ENCODE measurements at regions of chr2 and their contacts with region 1.

Region 1: DNA sequence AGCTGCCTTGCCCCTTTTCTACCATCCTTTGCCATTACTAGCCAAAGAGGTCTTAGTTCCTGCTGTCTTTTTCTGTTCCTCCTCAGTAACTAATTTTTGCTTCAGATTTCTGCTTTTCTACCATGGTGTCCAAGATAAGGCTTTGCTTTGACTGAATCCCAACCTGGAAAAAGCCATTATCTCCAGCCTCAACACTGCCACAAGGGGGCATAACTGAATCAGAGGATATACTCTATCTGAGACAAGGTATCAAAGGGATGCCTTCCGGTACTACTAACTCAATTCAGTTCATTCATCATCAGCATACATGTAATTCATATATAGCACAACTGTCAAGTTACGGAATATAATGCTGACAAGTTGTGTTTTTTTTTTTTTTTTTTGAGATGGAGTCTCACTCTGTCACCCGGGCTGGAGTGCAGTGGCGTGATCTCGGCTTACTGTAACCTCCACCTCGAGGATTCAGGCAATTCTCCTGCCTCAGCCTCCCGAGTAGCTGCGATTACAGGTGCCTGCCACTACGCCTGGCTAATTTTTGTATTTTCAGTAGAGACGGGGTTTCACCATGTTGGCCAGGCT is 11.4 kb downstream of the OSGEPL1 start:
- DNase-seq: peak; percentile 83
- H3K4me3 Mint-ChIP-seq: no peak overlapping the region
- H3K27ac Mint-ChIP-seq: no peak overlapping the region
- H3K4me1 Mint-ChIP-seq: no peaks in the 10 kb centered on the region
- H3K27me3 Mint-ChIP-seq: no peaks in the 10 kb centered on the region

Region 2: DNA sequence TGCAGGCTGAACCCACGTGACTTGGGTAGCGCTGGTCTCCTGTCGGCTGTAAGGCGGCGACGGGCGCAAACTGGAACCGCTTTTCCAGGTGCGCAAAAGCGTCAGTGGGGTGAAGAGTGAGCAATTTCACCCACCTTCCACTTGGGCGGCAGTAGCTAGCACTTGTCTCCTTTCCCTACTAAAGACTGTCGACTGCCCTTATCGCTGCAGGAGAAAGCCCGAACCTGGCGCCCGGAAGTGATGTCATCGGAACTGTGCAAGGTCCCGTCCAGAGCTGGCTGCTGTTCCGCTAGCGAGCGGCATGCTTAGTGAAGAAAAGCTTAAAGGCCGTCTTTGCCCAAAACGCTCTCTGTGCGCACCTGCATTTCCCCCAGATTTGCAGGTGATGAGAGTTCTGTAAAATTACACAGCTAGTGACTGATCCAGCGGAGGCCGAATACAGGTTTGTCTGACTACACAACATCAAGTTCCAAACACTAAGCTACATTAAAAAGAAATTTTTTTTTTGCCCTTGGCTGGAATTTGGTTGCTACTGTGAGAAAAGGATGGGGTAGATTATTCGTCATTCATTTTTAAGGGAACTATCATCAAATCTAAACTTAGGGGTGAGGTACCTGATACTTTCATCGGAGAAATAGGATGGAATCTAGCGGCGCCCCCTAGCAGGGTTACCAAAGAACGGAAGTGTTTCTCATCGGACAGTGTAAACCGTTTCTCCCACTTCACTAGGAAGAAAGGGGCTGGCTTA is 11.6 kb after region 1 on chr2 and contains the start of gene OSGEPL1:
- intact Hi-C with region 1: loop called (anchors 1 kb)
- DNase-seq: peak; percentile 97
- H3K4me3 Mint-ChIP-seq: peak within 1 kb of the TSS; percentile 97
- H3K27ac Mint-ChIP-seq: peak within 1 kb of the TSS; percentile 98
- H3K4me1 Mint-ChIP-seq: peaks cover 12% of the 10 kb centered on the region
- H3K27me3 Mint-ChIP-seq: no peaks in the 10 kb centered on the region
- total RNA-seq, gene OSGEPL1: 11.1 and 12.2 TPM in 2 replicates

Region 3: DNA sequence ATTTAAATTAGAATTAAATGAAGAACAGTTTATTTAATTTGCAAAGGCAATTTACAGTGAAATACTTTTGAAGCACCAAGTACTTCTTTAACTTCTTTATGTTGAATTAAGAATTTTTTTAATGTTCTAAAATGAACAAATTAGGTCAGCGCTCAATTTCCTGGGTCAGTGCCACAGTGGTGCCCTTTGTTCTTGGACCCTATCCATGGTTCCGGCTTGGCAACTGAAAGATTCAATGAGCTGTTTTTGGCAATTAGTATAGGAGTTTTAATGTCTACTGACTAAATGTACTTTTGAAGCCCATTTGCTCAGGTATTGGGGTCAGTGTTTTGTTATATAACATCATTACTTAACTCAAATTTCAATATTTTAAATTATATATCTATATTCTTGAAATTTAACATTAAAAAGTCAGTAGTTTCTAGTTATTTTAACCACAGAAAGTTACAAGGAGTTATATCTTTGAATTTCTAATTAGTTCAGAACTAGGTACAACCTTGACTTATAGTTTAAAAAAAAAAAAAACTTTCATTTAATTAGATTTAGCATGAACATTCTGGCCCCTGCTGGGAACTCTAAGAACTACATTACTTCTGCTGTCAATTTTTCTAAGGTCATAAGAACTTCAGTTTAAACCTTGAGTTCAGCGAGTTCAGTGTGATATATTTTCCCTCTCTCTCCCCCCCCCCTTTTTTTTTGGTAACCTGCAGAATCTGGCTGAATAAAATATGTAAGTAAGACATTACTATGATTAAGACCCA is 318.9 kb after region 1 on chr2:
- intact Hi-C with region 1: loop called (anchors 1 kb)
- DNase-seq: peak; percentile 75
- H3K4me3 Mint-ChIP-seq: no peak overlapping the region
- H3K27ac Mint-ChIP-seq: no peak overlapping the region
- H3K4me1 Mint-ChIP-seq: no peaks in the 10 kb centered on the region
- H3K27me3 Mint-ChIP-seq: peaks cover 5% of the 10 kb centered on the region

Measured in activated CD4-positive, alpha-beta T cell treated with anti-CD3 and anti-CD28 coated beads, Interleukin-2, amount 10 ng/mL, durations not matched to agents 24 days and 14 days (primary cell).